Ascending aorta (tissue), 2 donors: ENCODE measurements at regions of chr1 and their contacts with region 1.

Region 1: GRCh38 chr1:244970661-244971551 is 106.6 kb upstream of the HNRNPU start:
- DNase-seq: peak; percentile 69 to 95
- H3K4me3 ChIP-seq: peak overlapping the region; percentile 73 to 80
- H3K27ac ChIP-seq: peak overlapping the region; percentile 99
- H3K4me1 ChIP-seq: peaks cover 0 to 9% of the 10 kb centered on the region in 2 donors
- H3K27me3 ChIP-seq: no peaks in the 10 kb centered on the region
- CTCF ChIP-seq: peak; percentile 46 to 78 (median 69)

Region 2: DNA sequence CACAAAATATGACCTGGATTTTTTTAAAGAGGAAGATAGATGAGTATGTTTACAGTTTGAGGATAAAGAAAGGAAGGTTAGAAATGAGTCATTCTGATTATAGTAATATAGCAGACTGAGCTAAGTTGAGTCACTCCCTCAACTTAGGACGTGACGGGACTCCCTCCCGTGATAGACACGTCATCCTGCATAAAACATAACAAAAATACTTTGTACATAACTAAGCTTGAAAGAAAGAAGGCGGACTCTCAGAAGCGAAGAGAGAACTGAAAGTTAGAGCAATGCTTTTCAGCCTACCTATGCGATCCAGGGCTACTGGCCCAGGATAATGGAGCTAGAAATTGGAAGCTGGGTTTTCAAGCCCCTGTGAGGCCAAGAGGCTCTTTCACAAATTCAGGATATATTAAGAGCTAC is 371.0 kb before region 1 on chr1:
- intact Hi-C with region 1: loop called (anchors 5 kb)
- DNase-seq: peak; percentile 18 to 76
- H3K4me3 ChIP-seq: peak overlapping the region in 1 of 2 donors; percentile 21
- H3K27ac ChIP-seq: peak overlapping the region in 1 of 2 donors; percentile 45
- H3K4me1 ChIP-seq: no peaks in the 10 kb centered on the region
- H3K27me3 ChIP-seq: no peaks in the 10 kb centered on the region
- CTCF ChIP-seq: no peak

Region 3: GRCh38 chr1:244835276-244836134 is 135.4 kb before region 1 on chr1 and contains the start of gene COX20:
- intact Hi-C with region 1: loop called (anchors 1 kb)
- DNase-seq: peak; percentile 50 to 93
- H3K4me3 ChIP-seq: peak within 1 kb of the TSS; percentile 67 to 76
- H3K27ac ChIP-seq: peak within 1 kb of the TSS; percentile 98 to 99
- H3K4me1 ChIP-seq: peaks cover 0 to 16% of the 10 kb centered on the region in 2 donors
- H3K27me3 ChIP-seq: no peaks in the 10 kb centered on the region
- CTCF ChIP-seq: no peak
- total RNA-seq, gene COX20: 8.2 TPM

Region 4: DNA sequence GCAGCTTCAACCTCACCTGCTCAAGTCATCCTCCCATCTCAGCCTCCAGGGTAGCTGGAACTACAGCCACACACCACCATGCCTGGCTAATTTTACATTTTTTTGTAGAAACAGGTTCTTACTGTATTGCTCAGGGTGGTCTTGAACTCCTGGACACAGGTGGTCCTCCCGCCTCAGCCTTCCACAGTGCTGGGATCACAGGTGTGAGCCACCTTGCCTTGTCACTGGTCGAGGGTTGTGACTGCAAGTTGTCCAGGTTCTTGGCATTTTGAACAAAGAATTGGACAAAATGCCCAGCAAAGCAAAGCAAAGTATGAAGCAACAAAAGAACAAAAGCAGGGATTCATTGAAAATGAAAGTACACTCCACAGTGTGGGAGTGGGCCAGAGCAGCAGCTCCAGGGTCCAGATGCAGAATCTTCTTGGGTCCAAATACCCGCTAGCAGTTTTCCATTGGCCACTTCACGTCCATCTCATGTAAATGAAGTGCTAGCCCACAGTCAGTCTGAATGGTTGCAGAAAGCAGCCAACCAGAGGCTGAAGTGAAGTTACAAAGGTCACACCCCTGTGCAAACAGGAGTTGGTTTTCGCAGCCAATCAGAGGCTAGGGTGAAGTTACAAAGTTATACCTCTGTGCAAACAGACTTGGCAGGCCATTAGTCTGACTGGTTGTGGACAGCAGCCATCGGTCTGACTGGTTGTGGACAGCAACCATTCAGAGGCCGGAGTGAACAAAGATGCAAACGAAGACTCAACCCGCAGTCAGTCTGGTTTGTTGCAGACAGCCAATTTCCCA is 74.4 kb after region 1 on chr1:
- intact Hi-C with region 1: loop called (anchors 1 kb)
- DNase-seq: no peak
- H3K4me3 ChIP-seq: peak overlapping the region in 1 of 2 donors; percentile 35
- H3K27ac ChIP-seq: no peak overlapping the region
- H3K4me1 ChIP-seq: no peaks in the 10 kb centered on the region
- H3K27me3 ChIP-seq: no peaks in the 10 kb centered on the region
- CTCF ChIP-seq: no peak

Region 5: GRCh38 chr1:245915406-245915805 is 944.5 kb after region 1 on chr1:
- intact Hi-C with region 1: no loop called
- DNase-seq: no peak
- H3K4me3 ChIP-seq: no peak overlapping the region
- H3K27ac ChIP-seq: no peak overlapping the region
- H3K4me1 ChIP-seq: no peaks in the 10 kb centered on the region
- H3K27me3 ChIP-seq: no peaks in the 10 kb centered on the region
- CTCF ChIP-seq: no peak